Activated naive CD4-positive, alpha-beta T cell treated with anti-CD3 and anti-CD28 coated beads for 36 hours (primary cell): ENCODE measurements at regions of chr11 and their contacts with region 1.

Region 1: GRCh38 chr11:74739546-74740270 is 8.5 kb upstream of the CHRDL2 start:
- DNase-seq: peak; percentile 53
- H3K4me3 Mint-ChIP-seq: no peak overlapping the region
- H3K27ac Mint-ChIP-seq: no peak overlapping the region
- H3K4me1 Mint-ChIP-seq: peaks cover 15% of the 10 kb centered on the region
- H3K27me3 Mint-ChIP-seq: peaks cover 15% of the 10 kb centered on the region

Region 2: GRCh38 chr11:74611369-74611861 is 128.3 kb before region 1 on chr11:
- CTCF ChIA-PET with region 1: interaction called, 3 read pairs
- intact Hi-C with region 1: loop called (anchors 5 kb)
- DNase-seq: no peak
- H3K4me3 Mint-ChIP-seq: no peak overlapping the region
- H3K27ac Mint-ChIP-seq: no peak overlapping the region
- H3K4me1 Mint-ChIP-seq: no peaks in the 10 kb centered on the region
- H3K27me3 Mint-ChIP-seq: no peaks in the 10 kb centered on the region

Region 3: DNA sequence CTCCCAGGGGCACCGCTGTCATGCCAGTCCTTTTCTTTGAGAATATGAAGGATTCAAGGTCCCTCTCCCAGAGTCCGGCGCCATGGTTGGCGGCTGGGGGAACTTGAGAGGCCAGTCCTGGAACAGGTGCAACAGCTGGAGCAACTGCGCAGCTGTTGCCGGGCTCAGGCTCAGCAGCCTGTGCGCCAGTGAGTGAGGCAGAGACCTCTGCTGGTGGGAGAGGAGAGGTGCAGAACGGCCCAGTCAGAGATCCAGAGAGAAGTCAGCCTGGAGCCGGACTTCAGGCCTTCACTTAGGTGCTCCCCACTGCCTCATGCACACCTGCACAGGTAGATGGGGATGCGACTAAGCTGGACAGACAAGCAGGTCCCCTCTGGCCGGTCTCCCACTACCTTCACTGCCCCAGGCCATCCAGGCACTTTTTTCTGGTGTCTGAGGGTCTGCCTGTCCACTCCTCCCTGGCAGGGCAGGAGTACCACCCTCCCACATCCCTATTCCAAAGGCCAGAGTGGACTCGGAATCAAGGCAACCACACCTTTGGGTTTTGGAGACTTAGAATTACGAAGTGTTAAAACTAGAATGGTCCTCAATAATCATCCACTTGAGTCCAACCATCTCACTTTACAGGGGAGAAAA is 13.0 kb before region 1 on chr11:
- CTCF ChIA-PET with region 1: interaction called, 43 read pairs
- intact Hi-C with region 1: no loop called
- DNase-seq: peak; percentile 69
- H3K4me3 Mint-ChIP-seq: no peak overlapping the region
- H3K27ac Mint-ChIP-seq: no peak overlapping the region
- H3K4me1 Mint-ChIP-seq: peaks cover 9% of the 10 kb centered on the region
- H3K27me3 Mint-ChIP-seq: peaks cover 27% of the 10 kb centered on the region

Region 4: GRCh38 chr11:74895340-74896116 is 155.8 kb after region 1 on chr11:
- CTCF ChIA-PET with region 1: no interaction called
- intact Hi-C with region 1: no loop called
- DNase-seq: no peak
- H3K4me3 Mint-ChIP-seq: no peak overlapping the region
- H3K27ac Mint-ChIP-seq: no peak overlapping the region
- H3K4me1 Mint-ChIP-seq: no peaks in the 10 kb centered on the region
- H3K27me3 Mint-ChIP-seq: no peaks in the 10 kb centered on the region